CD4-positive, alpha-beta memory T cell (primary cell): ENCODE measurements at regions of chr2 and their contacts with region 1.

Region 1: GRCh38 chr2:105929516-105929915 is 184.8 kb downstream of the NCK2 start:
- DNase-seq: peak; percentile 62 to 72 (median 68)
- H3K4me3 ChIP-seq: no peak overlapping the region
- H3K4me3 Mint-ChIP-seq: peak overlapping the region; percentile 33 to 81 (median 63)
- H3K27ac ChIP-seq: no peak overlapping the region
- H3K27ac Mint-ChIP-seq: peak overlapping the region; percentile 73 to 97 (median 90)
- H3K4me1 ChIP-seq: peaks cover 89% of the 10 kb centered on the region
- H3K4me1 Mint-ChIP-seq: peaks cover 50 to 66% (median 65%) of the 10 kb centered on the region in 4 donors
- H3K27me3 ChIP-seq: no peaks in the 10 kb centered on the region
- H3K27me3 Mint-ChIP-seq: no peaks in the 10 kb centered on the region

Region 2: DNA sequence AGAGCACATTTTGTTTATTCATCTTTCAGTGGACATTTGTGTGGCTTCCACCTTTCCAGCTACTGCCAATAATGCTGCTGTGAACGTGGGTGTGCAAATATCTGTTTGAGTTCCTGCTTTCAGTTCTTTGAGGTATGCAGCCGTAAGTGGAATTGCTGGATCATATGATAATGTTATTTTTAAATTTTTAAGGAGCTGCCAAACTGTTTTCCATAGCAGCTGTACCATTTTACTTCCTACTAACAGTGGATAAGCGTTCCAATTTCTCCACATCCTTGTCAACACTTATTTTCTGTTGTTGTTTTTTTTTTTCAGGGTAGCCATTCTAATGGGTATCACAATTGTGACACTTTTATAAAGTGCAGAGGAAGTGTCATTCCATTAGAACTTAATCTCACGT is 22.3 kb before region 1 on chr2:
- CTCF ChIA-PET with region 1: interaction called, 3 read pairs
- POLR2A ChIA-PET with region 1: interaction called, 10 read pairs
- intact Hi-C with region 1: no loop called
- DNase-seq: no peak
- H3K4me3 ChIP-seq: no peak overlapping the region
- H3K4me3 Mint-ChIP-seq: peak overlapping the region in 1 of 8 donors; percentile 39
- H3K27ac ChIP-seq: no peak overlapping the region
- H3K27ac Mint-ChIP-seq: peak overlapping the region in 2 of 7 donors; percentile 4 to 43
- H3K4me1 ChIP-seq: peaks cover 36% of the 10 kb centered on the region
- H3K4me1 Mint-ChIP-seq: peaks cover 35 to 58% (median 44%) of the 10 kb centered on the region in 4 donors
- H3K27me3 ChIP-seq: no peaks in the 10 kb centered on the region
- H3K27me3 Mint-ChIP-seq: no peaks in the 10 kb centered on the region

Region 3: GRCh38 chr2:105950521-105951383 is 21.2 kb after region 1 on chr2:
- CTCF ChIA-PET with region 1: interaction called, 6 read pairs
- POLR2A ChIA-PET with region 1: interaction called, 15 read pairs
- intact Hi-C with region 1: no loop called
- DNase-seq: no peak
- H3K4me3 ChIP-seq: no peak overlapping the region
- H3K4me3 Mint-ChIP-seq: peak overlapping the region in 1 of 8 donors; percentile 33
- H3K27ac ChIP-seq: no peak overlapping the region
- H3K27ac Mint-ChIP-seq: peak overlapping the region in 2 of 7 donors; percentile 14 to 39
- H3K4me1 ChIP-seq: peaks cover 26% of the 10 kb centered on the region
- H3K4me1 Mint-ChIP-seq: peaks cover 27 to 41% (median 37%) of the 10 kb centered on the region in 4 donors
- H3K27me3 ChIP-seq: no peaks in the 10 kb centered on the region
- H3K27me3 Mint-ChIP-seq: no peaks in the 10 kb centered on the region

Region 4: DNA sequence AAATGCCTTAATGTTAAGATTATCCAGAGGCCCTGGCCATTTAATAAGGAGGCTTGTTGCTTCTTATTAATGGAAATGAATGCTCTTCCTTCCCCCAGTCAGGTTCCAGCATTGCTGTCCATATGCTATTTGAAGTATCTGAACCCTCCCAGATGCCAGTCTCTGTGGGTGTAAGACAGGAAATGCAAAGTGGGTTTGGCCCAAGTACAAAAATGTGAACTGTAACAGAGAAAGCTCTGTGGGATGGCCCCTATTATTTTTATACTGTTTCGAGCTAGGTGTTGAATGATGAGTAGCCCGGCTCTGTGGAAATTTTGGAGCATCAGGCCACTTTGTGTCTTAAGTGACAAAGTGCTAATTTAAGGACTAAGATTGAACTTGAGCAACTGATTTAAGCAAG is 123.6 kb after region 1 on chr2:
- CTCF ChIA-PET with region 1: interaction called, 3 read pairs
- POLR2A ChIA-PET with region 1: interaction called, 11 read pairs
- intact Hi-C with region 1: no loop called
- DNase-seq: peak in 4 of 5 donors; percentile 31 to 39 (median 36)
- H3K4me3 ChIP-seq: no peak overlapping the region
- H3K4me3 Mint-ChIP-seq: peak overlapping the region; percentile 33 to 85 (median 71)
- H3K27ac ChIP-seq: no peak overlapping the region
- H3K27ac Mint-ChIP-seq: peak overlapping the region in 4 of 7 donors; percentile 21 to 82 (median 71)
- H3K4me1 ChIP-seq: peaks cover 65% of the 10 kb centered on the region
- H3K4me1 Mint-ChIP-seq: peaks cover 48 to 72% (median 63%) of the 10 kb centered on the region in 4 donors
- H3K27me3 ChIP-seq: no peaks in the 10 kb centered on the region
- H3K27me3 Mint-ChIP-seq: no peaks in the 10 kb centered on the region

Region 5: GRCh38 chr2:106147159-106147558 is 217.6 kb after region 1 on chr2:
- CTCF ChIA-PET with region 1: no interaction called
- POLR2A ChIA-PET with region 1: no interaction called
- intact Hi-C with region 1: no loop called
- DNase-seq: no peak
- H3K4me3 ChIP-seq: no peak overlapping the region
- H3K4me3 Mint-ChIP-seq: peak overlapping the region in 7 of 8 donors; percentile 29 to 79 (median 62)
- H3K27ac ChIP-seq: peak overlapping the region; percentile 28
- H3K27ac Mint-ChIP-seq: peak overlapping the region; percentile 74 to 97 (median 93)
- H3K4me1 ChIP-seq: peaks cover 75% of the 10 kb centered on the region
- H3K4me1 Mint-ChIP-seq: peaks cover 54 to 86% (median 67%) of the 10 kb centered on the region in 4 donors
- H3K27me3 ChIP-seq: no peaks in the 10 kb centered on the region
- H3K27me3 Mint-ChIP-seq: no peaks in the 10 kb centered on the region